Naive thymus-derived CD4-positive, alpha-beta T cell (primary cell): ENCODE measurements at regions of chr12 and their contacts with region 1.

Region 1: GRCh38 chr12:27779920-27780611 is at the starts of genes KLHL42 and MANSC4:
- DNase-seq: peak; percentile 52 to 73 (median 70)
- ATAC-seq: peak; percentile 90
- H3K4me3 ChIP-seq: peak within 1 kb of the TSS; percentile 81
- H3K4me3 Mint-ChIP-seq: peak within 1 kb of the TSS; percentile 84 to 94 (median 91)
- H3K27ac ChIP-seq: peak within 1 kb of the TSS; percentile 76
- H3K27ac Mint-ChIP-seq: peak within 1 kb of the TSS; percentile 74 to 94 (median 88)
- H3K4me1 ChIP-seq: peaks cover 5 to 12% of the 10 kb centered on the region in 2 donors
- H3K4me1 Mint-ChIP-seq: peaks cover 18 to 43% (median 38%) of the 10 kb centered on the region in 7 donors
- H3K27me3 ChIP-seq: no peaks in the 10 kb centered on the region
- H3K27me3 Mint-ChIP-seq: peaks cover 0 to 18% (median 0%) of the 10 kb centered on the region in 5 donors
- total RNA-seq, gene KLHL42: 16.0 to 27.0 (median 18.4) TPM
- total RNA-seq, gene MANSC4: 0.64 TPM in 1 of 5 experiments, not detected in the others

Region 2: GRCh38 chr12:27024291-27024690 is 755.8 kb before region 1 on chr12:
- CTCF ChIA-PET with region 1: no interaction called
- POLR2A ChIA-PET with region 1: no interaction called
- intact Hi-C with region 1: loop called in 1 of 2 experiments (anchors 10 kb)
- DNase-seq: no peak
- ATAC-seq: no peak
- H3K4me3 ChIP-seq: no peak overlapping the region
- H3K4me3 Mint-ChIP-seq: peak overlapping the region; percentile 34 to 100 (median 96)
- H3K27ac ChIP-seq: no peak overlapping the region
- H3K27ac Mint-ChIP-seq: no peak overlapping the region
- H3K4me1 ChIP-seq: peaks cover 17 to 25% of the 10 kb centered on the region in 2 donors
- H3K4me1 Mint-ChIP-seq: peaks cover 28 to 47% (median 43%) of the 10 kb centered on the region in 7 donors
- H3K27me3 ChIP-seq: no peaks in the 10 kb centered on the region
- H3K27me3 Mint-ChIP-seq: peaks cover 0 to 4% (median 0%) of the 10 kb centered on the region in 5 donors

Region 3: GRCh38 chr12:27733052-27733656 is 46.9 kb before region 1 on chr12:
- CTCF ChIA-PET with region 1: no interaction called
- POLR2A ChIA-PET with region 1: no interaction called
- intact Hi-C with region 1: loop called (anchors 5 kb)
- DNase-seq: peak in 6 of 9 donors; percentile 12 to 42 (median 28)
- ATAC-seq: peak; percentile 73
- H3K4me3 ChIP-seq: no peak overlapping the region
- H3K4me3 Mint-ChIP-seq: no peak overlapping the region
- H3K27ac ChIP-seq: no peak overlapping the region
- H3K27ac Mint-ChIP-seq: no peak overlapping the region
- H3K4me1 ChIP-seq: no peaks in the 10 kb centered on the region
- H3K4me1 Mint-ChIP-seq: peaks cover 0 to 3% (median 0%) of the 10 kb centered on the region in 7 donors
- H3K27me3 ChIP-seq: no peaks in the 10 kb centered on the region
- H3K27me3 Mint-ChIP-seq: no peaks in the 10 kb centered on the region

Region 4: DNA sequence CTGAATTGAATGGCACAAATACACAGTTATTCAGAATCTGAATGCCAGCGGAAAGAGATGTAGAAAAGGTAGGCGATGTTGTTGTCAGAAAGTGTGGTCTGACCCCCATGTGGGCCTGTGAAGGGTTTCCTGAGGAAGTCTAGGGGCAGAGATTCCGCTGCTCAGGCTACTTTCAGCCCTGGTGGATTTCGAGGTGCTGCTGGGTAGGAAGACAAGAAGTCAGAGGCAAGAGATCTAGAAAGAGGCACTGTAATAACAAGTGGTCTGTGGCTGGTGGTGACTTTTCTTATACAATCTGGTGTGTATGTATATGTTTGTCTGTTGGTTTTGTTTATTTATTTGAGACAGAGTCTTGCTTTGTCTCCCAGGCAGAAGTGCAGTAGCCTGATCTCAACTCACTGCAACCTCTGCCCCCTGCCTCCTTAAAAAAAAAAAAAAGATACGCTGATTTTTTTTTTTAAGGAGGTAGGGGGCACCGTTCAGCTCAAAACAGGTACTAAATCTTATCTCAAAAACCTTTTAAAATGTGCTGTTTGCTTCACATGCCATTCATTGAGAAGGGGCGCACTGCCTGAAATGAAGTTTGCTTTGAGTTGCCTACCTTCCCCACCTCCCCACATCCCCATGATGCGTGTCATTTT is 27.1 kb after region 1 on chr12:
- CTCF ChIA-PET with region 1: no interaction called
- POLR2A ChIA-PET with region 1: interaction called, 13 read pairs
- intact Hi-C with region 1: loop called in 1 of 2 experiments (anchors 1 kb)
- DNase-seq: peak in 3 of 9 donors; percentile 10 to 14 (median 13)
- ATAC-seq: peak; percentile 36
- H3K4me3 ChIP-seq: no peak overlapping the region
- H3K4me3 Mint-ChIP-seq: peak overlapping the region; percentile 1 to 87 (median 74)
- H3K27ac ChIP-seq: peak overlapping the region; percentile 46
- H3K27ac Mint-ChIP-seq: peak overlapping the region; percentile 20 to 95 (median 86)
- H3K4me1 ChIP-seq: no peaks in the 10 kb centered on the region
- H3K4me1 Mint-ChIP-seq: peaks cover 7 to 47% (median 24%) of the 10 kb centered on the region in 7 donors
- H3K27me3 ChIP-seq: no peaks in the 10 kb centered on the region
- H3K27me3 Mint-ChIP-seq: peaks cover 0 to 18% (median 0%) of the 10 kb centered on the region in 5 donors

Region 5: GRCh38 chr12:29380536-29381523 is 1600.8 kb after region 1 on chr12 and contains the start of gene ERGIC2:
- CTCF ChIA-PET with region 1: no interaction called
- POLR2A ChIA-PET with region 1: no interaction called
- intact Hi-C with region 1: loop called in 1 of 2 experiments (anchors 2 kb)
- DNase-seq: peak; percentile 63 to 97 (median 95)
- ATAC-seq: peak; percentile 97
- H3K4me3 ChIP-seq: peak within 1 kb of the TSS; percentile 98
- H3K4me3 Mint-ChIP-seq: peak within 1 kb of the TSS; percentile 88 to 97 (median 94)
- H3K27ac ChIP-seq: peak within 1 kb of the TSS; percentile 91
- H3K27ac Mint-ChIP-seq: peak within 1 kb of the TSS; percentile 92 to 98 (median 96)
- H3K4me1 ChIP-seq: peaks cover 9 to 12% of the 10 kb centered on the region in 2 donors
- H3K4me1 Mint-ChIP-seq: peaks cover 20 to 63% (median 46%) of the 10 kb centered on the region in 7 donors
- H3K27me3 ChIP-seq: no peaks in the 10 kb centered on the region
- H3K27me3 Mint-ChIP-seq: no peaks in the 10 kb centered on the region
- total RNA-seq, gene ERGIC2: 36.0 to 85.7 (median 78.6) TPM